ENCODE measurements at regions of chr16 and their contacts with region 1.

Region 1: DNA sequence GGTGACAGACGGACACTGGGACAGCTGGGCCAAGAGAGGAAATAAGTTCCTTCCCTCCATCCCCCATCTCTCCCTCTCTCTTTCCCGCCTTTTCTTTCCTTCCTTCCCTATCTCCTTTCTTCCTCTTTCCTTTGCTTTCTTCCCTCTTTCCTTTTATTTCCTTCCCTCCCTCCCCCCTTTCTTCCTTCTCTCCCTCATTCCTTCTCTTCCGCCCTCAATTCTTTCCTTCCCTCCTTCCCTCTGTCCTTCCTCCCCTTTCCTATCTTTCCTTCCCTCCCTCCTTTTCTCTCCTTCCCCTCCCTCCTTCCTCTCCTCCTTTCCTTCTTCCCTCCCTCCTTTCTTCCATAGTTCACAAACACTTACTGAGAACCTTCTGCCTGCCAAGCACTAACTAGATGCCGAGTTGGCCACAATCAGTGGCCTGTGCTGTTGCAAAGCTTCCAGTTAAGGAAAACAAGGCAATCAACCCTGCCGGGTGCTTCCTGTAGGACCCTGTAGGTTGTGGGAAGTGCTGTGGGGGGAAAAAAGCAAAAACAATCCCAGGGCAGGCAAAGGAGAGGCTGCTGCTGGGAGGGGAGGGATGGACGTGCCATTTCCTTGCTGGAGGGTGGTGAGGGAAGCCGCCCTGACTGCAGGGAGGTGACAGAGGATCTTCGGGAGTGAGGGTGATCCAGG is 31.7 kb downstream of the ABCC6 start:
- DNase-seq: no peak
- H3K4me3 ChIP-seq: no peak overlapping the region
- H3K27ac ChIP-seq: no peak overlapping the region
- H3K4me1 ChIP-seq: peaks cover 0 to 17% (median 13%) of the 10 kb centered on the region in 4 donors
- H3K27me3 ChIP-seq: no peaks in the 10 kb centered on the region
- CTCF ChIP-seq: no peak
- EP300 ChIP-seq: no peak
- POLR2A ChIP-seq: no peak

Region 2: GRCh38 chr16:15690296-15690695 is 501.3 kb before region 1 on chr16:
- intact Hi-C with region 1: loop called (anchors 10 kb)
- DNase-seq: no peak
- H3K4me3 ChIP-seq: no peak overlapping the region
- H3K27ac ChIP-seq: no peak overlapping the region
- H3K4me1 ChIP-seq: no peaks in the 10 kb centered on the region
- H3K27me3 ChIP-seq: no peaks in the 10 kb centered on the region
- CTCF ChIP-seq: no peak
- EP300 ChIP-seq: no peak
- POLR2A ChIP-seq: no peak

Region 3: GRCh38 chr16:15765880-15766279 is 425.8 kb before region 1 on chr16:
- intact Hi-C with region 1: loop called (anchors 10 kb)
- DNase-seq: no peak
- H3K4me3 ChIP-seq: no peak overlapping the region
- H3K27ac ChIP-seq: peak overlapping the region; percentile 63 to 75 (median 74)
- H3K4me1 ChIP-seq: peaks cover 0 to 97% (median 88%) of the 10 kb centered on the region in 4 donors
- H3K27me3 ChIP-seq: no peaks in the 10 kb centered on the region
- CTCF ChIP-seq: peak; percentile 35 to 53 (median 40)
- EP300 ChIP-seq: no peak
- POLR2A ChIP-seq: no peak

Region 4: GRCh38 chr16:16143038-16143763 is 48.4 kb before region 1 on chr16:
- intact Hi-C with region 1: no loop called
- DNase-seq: no peak
- H3K4me3 ChIP-seq: no peak overlapping the region
- H3K27ac ChIP-seq: peak overlapping the region in 2 of 4 donors; percentile 10 to 30
- H3K4me1 ChIP-seq: peaks cover 0 to 42% (median 36%) of the 10 kb centered on the region in 4 donors
- H3K27me3 ChIP-seq: no peaks in the 10 kb centered on the region
- CTCF ChIP-seq: peak in 1 of 3 experiments; percentile 37
- EP300 ChIP-seq: no peak
- POLR2A ChIP-seq: no peak